ENCODE measurements at regions of chr14 and their contacts with region 1.

Region 1: DNA sequence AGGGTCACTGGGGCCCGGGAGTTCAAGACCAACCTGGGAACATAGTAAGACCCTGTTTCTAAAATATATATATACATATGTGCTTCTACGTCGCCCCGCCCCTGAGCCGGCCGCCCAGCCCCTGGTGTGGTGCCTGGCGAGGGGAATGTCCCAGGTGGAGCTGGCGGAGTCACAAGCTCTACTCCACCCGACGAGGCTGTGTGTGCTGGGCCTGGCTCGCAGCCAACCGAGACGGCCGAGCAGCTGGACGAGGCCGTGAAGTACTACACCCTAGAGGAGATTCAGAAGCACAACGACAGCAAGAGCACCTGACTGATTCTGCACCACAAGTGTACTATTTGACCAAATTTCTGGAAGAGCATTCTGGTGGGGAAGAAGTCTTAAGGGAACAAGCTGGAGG is 22.1 kb upstream of the ITPK1 start:
- H3K4me3 Mint-ChIP-seq: no peak overlapping the region
- H3K27ac Mint-ChIP-seq: no peak overlapping the region
- H3K4me1 Mint-ChIP-seq: peaks cover 42% of the 10 kb centered on the region
- H3K27me3 Mint-ChIP-seq: no peaks in the 10 kb centered on the region

Region 2: DNA sequence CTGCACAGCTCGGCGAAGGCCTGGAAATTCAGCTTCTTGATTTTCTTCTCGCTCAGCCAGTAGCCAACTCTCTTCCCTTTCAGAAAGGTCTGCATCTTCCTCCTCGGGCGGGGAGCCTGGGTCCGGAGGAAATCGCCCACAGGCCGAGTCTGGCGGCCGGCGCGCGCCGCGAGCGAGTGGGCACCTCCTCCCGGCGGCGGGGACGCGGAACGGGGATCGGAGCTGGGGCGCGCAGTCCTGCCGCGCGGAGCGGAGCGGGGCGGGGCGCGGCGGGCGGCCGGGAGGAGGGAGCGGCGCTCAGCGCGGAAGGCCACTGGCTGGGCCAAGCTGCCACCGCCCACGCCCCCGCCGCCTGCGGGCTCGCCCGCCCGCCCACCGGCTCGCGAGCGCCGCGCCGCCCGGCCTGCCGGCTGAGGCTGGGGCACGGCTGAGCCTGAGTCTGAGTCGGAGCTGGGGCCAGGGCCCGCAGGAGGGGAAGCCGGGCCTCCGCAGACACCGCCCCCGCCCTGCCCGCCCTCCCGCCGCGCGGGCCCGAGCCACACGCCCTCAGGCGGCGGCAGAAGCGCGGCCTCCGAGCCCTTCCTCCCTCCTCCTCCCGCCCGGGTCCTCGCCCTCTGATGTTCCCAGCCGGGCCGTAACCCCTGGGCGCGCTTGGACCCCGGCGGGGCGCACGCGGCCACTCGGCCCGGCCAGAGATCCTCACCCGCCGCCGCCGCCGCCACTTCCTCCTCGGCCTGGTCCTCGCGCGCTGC is 22.6 kb before region 1 on chr14:
- intact Hi-C with region 1: loop called (anchors 1 kb)
- H3K4me3 Mint-ChIP-seq: peak overlapping the region; percentile 83
- H3K27ac Mint-ChIP-seq: peak overlapping the region; percentile 86
- H3K4me1 Mint-ChIP-seq: peaks cover 66% of the 10 kb centered on the region
- H3K27me3 Mint-ChIP-seq: no peaks in the 10 kb centered on the region